ENCODE measurements at regions of chr4 and their contacts with region 1.

Region 1: DNA sequence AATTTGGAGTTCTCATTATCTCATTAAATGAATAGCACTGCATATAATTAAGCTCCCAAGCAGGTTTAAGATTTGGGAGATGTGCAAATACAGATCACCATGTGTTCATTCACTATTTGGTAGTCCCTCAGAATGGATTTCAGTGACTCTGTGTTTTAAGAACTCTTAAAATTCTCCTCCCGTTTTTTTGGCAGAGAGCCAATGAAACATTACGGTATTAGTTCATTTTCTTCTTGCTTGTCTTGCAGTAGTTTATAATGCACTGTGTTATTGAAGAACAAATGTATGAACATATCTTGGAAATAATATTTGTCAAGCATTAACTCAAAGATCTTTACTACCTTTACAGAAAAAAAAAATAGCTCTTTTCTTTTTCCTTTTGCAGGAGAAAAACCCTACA is 32.7 kb downstream of the KLF3 start:
- DNase-seq: peak; percentile 34
- H3K4me3 ChIP-seq: no peak overlapping the region
- H3K27ac ChIP-seq: no peak overlapping the region
- H3K4me1 ChIP-seq: peaks cover 26% of the 10 kb centered on the region
- H3K27me3 ChIP-seq: no peaks in the 10 kb centered on the region
- CTCF ChIP-seq: no peak

Region 2: DNA sequence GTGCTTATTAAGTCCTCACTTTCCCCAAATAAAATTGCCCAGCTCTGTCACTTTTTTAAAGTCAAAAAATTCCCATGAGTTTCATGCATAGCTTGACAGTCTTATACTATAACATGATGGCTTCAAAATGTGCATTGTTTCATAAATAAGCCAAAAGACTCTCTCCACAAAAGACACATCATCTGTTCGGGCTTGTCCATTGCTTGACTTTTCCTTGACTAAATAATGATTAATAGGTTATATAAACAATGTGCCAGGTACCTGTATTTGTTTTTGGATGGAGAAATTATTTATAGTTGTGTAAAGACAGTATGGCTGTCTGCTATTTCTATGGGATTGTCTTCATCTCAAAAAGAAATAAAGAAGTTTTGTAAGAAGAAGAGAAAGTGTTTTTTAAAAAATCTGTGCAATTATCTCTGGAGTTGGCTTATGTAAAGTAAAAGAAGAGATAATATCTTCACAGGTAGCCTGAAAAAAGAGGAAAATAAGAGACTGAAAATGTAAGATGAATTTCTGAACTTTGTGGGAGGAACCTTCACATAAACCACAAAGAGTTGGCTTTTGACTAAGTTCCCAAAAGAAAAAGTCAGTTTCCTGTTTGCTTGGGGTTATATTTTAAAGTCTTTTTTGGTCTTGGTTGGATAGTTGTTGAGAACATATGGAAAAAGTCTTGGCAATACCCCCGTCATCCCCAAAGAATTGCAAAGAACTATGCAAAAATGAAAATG is 361.7 kb before region 1 on chr4:
- CTCF ChIA-PET with region 1: no interaction called
- POLR2A ChIA-PET with region 1: no interaction called
- intact Hi-C with region 1: no loop called
- DNase-seq: no peak
- H3K4me3 ChIP-seq: no peak overlapping the region
- H3K27ac ChIP-seq: no peak overlapping the region
- H3K4me1 ChIP-seq: no peaks in the 10 kb centered on the region
- H3K27me3 ChIP-seq: no peaks in the 10 kb centered on the region
- CTCF ChIP-seq: no peak

Region 3: GRCh38 chr4:38582889-38583470 is 113.7 kb before region 1 on chr4:
- CTCF ChIA-PET with region 1: no interaction called
- POLR2A ChIA-PET with region 1: no interaction called
- intact Hi-C with region 1: no loop called
- DNase-seq: no peak
- H3K4me3 ChIP-seq: no peak overlapping the region
- H3K27ac ChIP-seq: no peak overlapping the region
- H3K4me1 ChIP-seq: no peaks in the 10 kb centered on the region
- H3K27me3 ChIP-seq: no peaks in the 10 kb centered on the region
- CTCF ChIP-seq: no peak

Region 4: GRCh38 chr4:38717604-38718003 is 20.9 kb after region 1 on chr4:
- CTCF ChIA-PET with region 1: interaction called, 13 read pairs
- POLR2A ChIA-PET with region 1: no interaction called
- intact Hi-C with region 1: no loop called
- DNase-seq: no peak
- H3K4me3 ChIP-seq: no peak overlapping the region
- H3K27ac ChIP-seq: no peak overlapping the region
- H3K4me1 ChIP-seq: no peaks in the 10 kb centered on the region
- H3K27me3 ChIP-seq: no peaks in the 10 kb centered on the region
- CTCF ChIP-seq: no peak

Measured in A673 (cell line).